ENCODE measurements at regions of chrX and their contacts with region 1.

Region 1: GRCh38 chrX:115690511-115691216 is 129.7 kb downstream of the PLS3 start:
- DNase-seq: peak; percentile 85
- H3K4me3 ChIP-seq: peak overlapping the region in 1 of 3 experiments; percentile 17
- H3K27ac ChIP-seq: peak overlapping the region; percentile 85
- H3K4me1 ChIP-seq: peaks cover 8% of the 10 kb centered on the region
- H3K27me3 ChIP-seq: no peaks in the 10 kb centered on the region
- CTCF ChIP-seq: peak; percentile 54 to 60
- POLR2A ChIP-seq: no peak

Region 2: GRCh38 chrX:115650916-115651315 is 39.7 kb before region 1 on chrX:
- CTCF ChIA-PET with region 1: interaction called, 3 read pairs
- POLR2A ChIA-PET with region 1: no interaction called
- dilution Hi-C with region 1: no loop called
- intact Hi-C with region 1: loop called (anchors 1 kb)
- DNase-seq: peak; percentile 31
- H3K4me3 ChIP-seq: no peak overlapping the region
- H3K27ac ChIP-seq: no peak overlapping the region
- H3K4me1 ChIP-seq: no peaks in the 10 kb centered on the region
- H3K27me3 ChIP-seq: no peaks in the 10 kb centered on the region
- CTCF ChIP-seq: peak; percentile 21 to 50
- POLR2A ChIP-seq: no peak

Region 3: GRCh38 chrX:115679460-115679859 is 11.2 kb before region 1 on chrX:
- CTCF ChIA-PET with region 1: interaction called, 12 read pairs
- POLR2A ChIA-PET with region 1: no interaction called
- dilution Hi-C with region 1: no loop called
- intact Hi-C with region 1: no loop called
- DNase-seq: peak; percentile 38
- H3K4me3 ChIP-seq: no peak overlapping the region
- H3K27ac ChIP-seq: no peak overlapping the region
- H3K4me1 ChIP-seq: no peaks in the 10 kb centered on the region
- H3K27me3 ChIP-seq: no peaks in the 10 kb centered on the region
- CTCF ChIP-seq: peak; percentile 24
- POLR2A ChIP-seq: no peak